ENCODE measurements at regions of chr1 and their contacts with region 1.

Region 1: DNA sequence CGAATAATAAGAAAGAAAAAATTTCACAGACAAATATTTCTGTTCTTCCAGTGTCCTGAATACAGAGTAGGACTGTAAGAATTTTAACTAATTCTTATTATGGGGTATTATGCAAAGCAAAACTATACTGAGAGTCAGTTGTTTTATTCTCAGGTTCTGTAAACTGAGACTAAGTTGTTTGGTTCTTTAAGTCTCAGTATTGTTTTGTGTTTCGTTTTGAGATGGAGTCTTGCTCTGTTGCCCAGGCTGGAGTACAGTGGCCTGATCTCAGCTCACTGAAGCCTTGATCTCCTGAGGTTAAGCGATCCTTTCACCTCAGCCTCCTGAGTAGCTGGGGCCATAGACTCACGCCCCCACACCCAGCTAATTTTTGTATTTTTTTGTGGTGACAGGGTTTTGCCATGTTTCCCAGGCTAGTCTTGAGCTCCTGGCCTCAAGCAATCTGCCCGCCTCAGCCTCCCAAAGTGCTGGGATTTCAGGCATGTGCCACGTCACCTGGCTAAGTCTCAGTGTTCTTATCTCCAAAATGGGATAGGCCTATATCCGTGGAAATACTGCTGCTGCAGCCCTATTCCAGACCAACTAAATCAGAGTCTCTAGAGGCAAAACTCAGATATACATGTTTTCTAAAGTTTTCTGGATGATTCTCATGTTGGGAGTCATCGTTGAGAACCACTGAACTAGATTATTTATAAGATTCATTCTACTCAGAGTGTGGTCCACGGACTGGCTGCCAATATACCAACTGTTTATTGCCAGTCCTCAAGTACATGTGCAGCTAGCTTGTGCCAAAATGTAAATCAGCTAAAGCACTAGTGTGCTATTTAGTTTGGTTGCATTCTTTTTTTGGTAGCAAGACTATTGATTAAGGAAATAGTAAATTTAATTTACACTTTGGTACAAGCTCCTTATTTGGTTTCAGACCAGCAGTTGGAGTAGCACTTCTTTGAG is 116.6 kb downstream of the HS2ST1 start:
- DNase-seq: no peak
- ATAC-seq: no peak
- H3K4me3 ChIP-seq: no peak overlapping the region
- H3K4me3 Mint-ChIP-seq: no peak overlapping the region
- H3K27ac ChIP-seq: no peak overlapping the region
- H3K27ac Mint-ChIP-seq: no peak overlapping the region
- H3K4me1 ChIP-seq: no peaks in the 10 kb centered on the region
- H3K4me1 Mint-ChIP-seq: peaks cover 0 to 2% (median 0%) of the 10 kb centered on the region in 3 donors
- H3K27me3 ChIP-seq: no peaks in the 10 kb centered on the region
- H3K27me3 Mint-ChIP-seq: no peaks in the 10 kb centered on the region

Region 2: DNA sequence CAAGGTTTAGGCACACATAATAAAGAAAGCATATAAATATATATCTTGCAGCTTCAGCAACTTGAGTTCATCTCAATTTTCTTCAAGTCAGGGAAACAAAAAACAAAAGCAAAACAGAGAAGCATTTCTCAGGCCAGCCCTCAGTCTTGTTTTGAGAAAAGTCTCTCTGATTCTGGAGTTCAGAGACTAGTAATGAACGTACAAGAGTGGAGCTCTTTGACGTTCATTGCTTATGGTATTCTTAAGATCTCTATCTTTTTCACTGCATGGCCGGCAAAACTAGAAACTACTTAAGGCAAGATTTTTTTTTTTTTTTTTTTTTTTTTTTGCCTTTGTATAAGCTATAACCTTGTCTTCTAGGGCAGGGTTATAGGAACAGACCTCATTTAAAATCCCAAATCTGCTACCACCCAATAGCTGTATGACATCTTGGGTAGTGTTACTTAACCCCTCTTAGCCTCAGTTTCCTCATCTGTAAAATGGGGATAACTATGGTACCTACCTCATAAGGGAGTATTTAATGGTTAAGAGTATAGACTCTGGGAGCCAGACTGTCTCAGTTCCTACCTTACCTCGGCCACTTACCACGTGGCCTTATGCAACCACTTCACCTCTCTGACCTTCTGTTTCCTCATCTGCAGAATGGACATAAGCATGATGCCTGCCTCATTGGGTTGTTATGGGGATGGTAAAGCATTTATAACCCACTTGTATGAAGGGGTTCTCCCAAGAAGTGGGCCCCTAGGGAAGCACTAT is 331.2 kb after region 1 on chr1:
- CTCF ChIA-PET with region 1: no interaction called
- POLR2A ChIA-PET with region 1: interaction called in 1 of 2 experiments, 17 read pairs
- DNase-seq: no peak
- ATAC-seq: no peak
- H3K4me3 ChIP-seq: no peak overlapping the region
- H3K4me3 Mint-ChIP-seq: no peak overlapping the region
- H3K27ac ChIP-seq: no peak overlapping the region
- H3K27ac Mint-ChIP-seq: peak overlapping the region in 1 of 2 donors; percentile 1
- H3K4me1 ChIP-seq: no peaks in the 10 kb centered on the region
- H3K4me1 Mint-ChIP-seq: no peaks in the 10 kb centered on the region
- H3K27me3 ChIP-seq: no peaks in the 10 kb centered on the region
- H3K27me3 Mint-ChIP-seq: no peaks in the 10 kb centered on the region